ENCODE measurements at regions of chr11 and their contacts with region 1.

Region 1: GRCh38 chr11:75399344-75400145 is at the start of gene RPS3:
- DNase-seq: peak; percentile 72 to 93 (median 88)
- ATAC-seq: peak; percentile 88
- H3K4me3 ChIP-seq: peak within 1 kb of the TSS; percentile 69 to 76
- H3K4me3 Mint-ChIP-seq: peak within 1 kb of the TSS; percentile 95
- H3K27ac ChIP-seq: peak within 1 kb of the TSS; percentile 88 to 89
- H3K27ac Mint-ChIP-seq: peak within 1 kb of the TSS; percentile 95
- H3K4me1 ChIP-seq: peaks cover 28% of the 10 kb centered on the region
- H3K4me1 Mint-ChIP-seq: peaks cover 48% of the 10 kb centered on the region
- H3K27me3 ChIP-seq: no peaks in the 10 kb centered on the region
- H3K27me3 Mint-ChIP-seq: no peaks in the 10 kb centered on the region
- CTCF ChIP-seq: no peak
- total RNA-seq, gene RPS3: 4,683 to 5,039 TPM

Region 2: GRCh38 chr11:74739546-74740270 is 659.8 kb before region 1 on chr11:
- CTCF ChIA-PET with region 1: no interaction called
- POLR2A ChIA-PET with region 1: no interaction called
- intact Hi-C with region 1: no loop called
- DNase-seq: peak in 7 of 9 experiments; percentile 17 to 75 (median 51)
- ATAC-seq: peak; percentile 90
- H3K4me3 ChIP-seq: no peak overlapping the region
- H3K4me3 Mint-ChIP-seq: no peak overlapping the region
- H3K27ac ChIP-seq: no peak overlapping the region
- H3K27ac Mint-ChIP-seq: no peak overlapping the region
- H3K4me1 ChIP-seq: peaks cover 6% of the 10 kb centered on the region
- H3K4me1 Mint-ChIP-seq: peaks cover 5% of the 10 kb centered on the region
- H3K27me3 ChIP-seq: no peaks in the 10 kb centered on the region
- H3K27me3 Mint-ChIP-seq: peaks cover 25% of the 10 kb centered on the region
- CTCF ChIP-seq: peak; percentile 94

Region 3: GRCh38 chr11:75371941-75372789 is 27.4 kb before region 1 on chr11:
- CTCF ChIA-PET with region 1: no interaction called
- POLR2A ChIA-PET with region 1: no interaction called
- intact Hi-C with region 1: no loop called
- DNase-seq: no peak
- ATAC-seq: no peak
- H3K4me3 ChIP-seq: no peak overlapping the region
- H3K4me3 Mint-ChIP-seq: no peak overlapping the region
- H3K27ac ChIP-seq: no peak overlapping the region
- H3K27ac Mint-ChIP-seq: no peak overlapping the region
- H3K4me1 ChIP-seq: peaks cover 9% of the 10 kb centered on the region
- H3K4me1 Mint-ChIP-seq: peaks cover 10% of the 10 kb centered on the region
- H3K27me3 ChIP-seq: no peaks in the 10 kb centered on the region
- H3K27me3 Mint-ChIP-seq: no peaks in the 10 kb centered on the region
- CTCF ChIP-seq: no peak

Region 4: GRCh38 chr11:75428281-75428724 is 28.8 kb after region 1 on chr11:
- CTCF ChIA-PET with region 1: no interaction called
- POLR2A ChIA-PET with region 1: interaction called, 11 read pairs
- intact Hi-C with region 1: no loop called
- DNase-seq: peak in 8 of 9 experiments; percentile 27 to 84 (median 62)
- ATAC-seq: peak; percentile 64
- H3K4me3 ChIP-seq: peak overlapping the region; percentile 13 to 22
- H3K4me3 Mint-ChIP-seq: peak overlapping the region; percentile 61
- H3K27ac ChIP-seq: no peak overlapping the region
- H3K27ac Mint-ChIP-seq: no peak overlapping the region
- H3K4me1 ChIP-seq: peaks cover 9% of the 10 kb centered on the region
- H3K4me1 Mint-ChIP-seq: peaks cover 16% of the 10 kb centered on the region
- H3K27me3 ChIP-seq: peaks cover 11 to 13% of the 10 kb centered on the region in 2 experiments
- H3K27me3 Mint-ChIP-seq: peaks cover 34% of the 10 kb centered on the region
- CTCF ChIP-seq: no peak

Region 5: GRCh38 chr11:75582895-75583717 is 183.6 kb after region 1 on chr11:
- CTCF ChIA-PET with region 1: no interaction called
- POLR2A ChIA-PET with region 1: no interaction called
- intact Hi-C with region 1: loop called in 1 of 2 experiments (anchors 5 kb)
- DNase-seq: peak in 8 of 9 experiments; percentile 7 to 81 (median 62)
- ATAC-seq: peak; percentile 95
- H3K4me3 ChIP-seq: peak overlapping the region; percentile 66 to 73
- H3K4me3 Mint-ChIP-seq: peak overlapping the region; percentile 87
- H3K27ac ChIP-seq: peak overlapping the region; percentile 53 to 68
- H3K27ac Mint-ChIP-seq: peak overlapping the region; percentile 84
- H3K4me1 ChIP-seq: peaks cover 9% of the 10 kb centered on the region
- H3K4me1 Mint-ChIP-seq: peaks cover 20% of the 10 kb centered on the region
- H3K27me3 ChIP-seq: no peaks in the 10 kb centered on the region
- H3K27me3 Mint-ChIP-seq: no peaks in the 10 kb centered on the region
- CTCF ChIP-seq: no peak

Region 6: DNA sequence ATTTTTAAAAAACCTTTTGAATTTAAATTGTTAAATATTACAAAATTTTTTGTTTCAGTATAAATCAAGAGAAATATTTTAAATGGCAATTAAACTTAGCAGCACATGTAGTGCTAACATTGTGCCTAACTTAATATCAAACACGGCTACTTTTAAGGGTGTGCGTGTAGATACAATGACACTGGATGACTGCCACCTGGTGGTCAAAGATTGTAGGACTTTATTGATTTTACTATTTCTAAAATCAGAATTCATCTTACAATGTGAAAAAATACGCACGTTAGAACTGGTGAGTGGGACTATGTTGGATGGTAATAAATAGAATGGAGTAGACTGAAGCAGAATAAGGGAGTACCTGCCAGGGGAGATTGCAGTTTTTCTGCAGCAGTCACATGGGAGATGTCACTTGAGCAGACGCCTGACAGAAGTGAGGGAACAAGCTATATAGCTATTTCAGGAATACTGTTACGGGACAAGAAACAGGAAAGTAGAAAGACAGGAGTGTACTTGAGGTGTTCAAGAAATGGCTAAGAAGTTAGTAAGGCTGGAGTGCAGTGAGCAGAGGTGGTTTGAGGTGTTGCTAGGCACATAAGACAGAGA is 468.3 kb after region 1 on chr11:
- CTCF ChIA-PET with region 1: no interaction called
- POLR2A ChIA-PET with region 1: no interaction called
- intact Hi-C with region 1: no loop called
- DNase-seq: peak in 7 of 9 experiments; percentile 24 to 74 (median 53)
- ATAC-seq: peak; percentile 61
- H3K4me3 ChIP-seq: no peak overlapping the region
- H3K4me3 Mint-ChIP-seq: no peak overlapping the region
- H3K27ac ChIP-seq: no peak overlapping the region
- H3K27ac Mint-ChIP-seq: no peak overlapping the region
- H3K4me1 ChIP-seq: no peaks in the 10 kb centered on the region
- H3K4me1 Mint-ChIP-seq: peaks cover 2% of the 10 kb centered on the region
- H3K27me3 ChIP-seq: no peaks in the 10 kb centered on the region
- H3K27me3 Mint-ChIP-seq: no peaks in the 10 kb centered on the region
- CTCF ChIP-seq: peak; percentile 90